Cardiac septum (tissue), 1 donor: ENCODE measurements at regions of chr10 and their contacts with region 1.

Region 1: GRCh38 chr10:58781873-58782488 is 269.3 kb downstream of the BICC1 start:
- DNase-seq: no peak

Region 2: GRCh38 chr10:59181668-59182067 is 399.7 kb after region 1 on chr10:
- intact Hi-C with region 1: loop called (anchors 5 kb)
- DNase-seq: no peak

Region 3: GRCh38 chr10:59234816-59235429 is 452.9 kb after region 1 on chr10:
- intact Hi-C with region 1: loop called (anchors 10 kb)
- DNase-seq: no peak